Posterior vena cava (tissue), 2 donors: ENCODE measurements at regions of chr11 and their contacts with region 1.

Region 1: DNA sequence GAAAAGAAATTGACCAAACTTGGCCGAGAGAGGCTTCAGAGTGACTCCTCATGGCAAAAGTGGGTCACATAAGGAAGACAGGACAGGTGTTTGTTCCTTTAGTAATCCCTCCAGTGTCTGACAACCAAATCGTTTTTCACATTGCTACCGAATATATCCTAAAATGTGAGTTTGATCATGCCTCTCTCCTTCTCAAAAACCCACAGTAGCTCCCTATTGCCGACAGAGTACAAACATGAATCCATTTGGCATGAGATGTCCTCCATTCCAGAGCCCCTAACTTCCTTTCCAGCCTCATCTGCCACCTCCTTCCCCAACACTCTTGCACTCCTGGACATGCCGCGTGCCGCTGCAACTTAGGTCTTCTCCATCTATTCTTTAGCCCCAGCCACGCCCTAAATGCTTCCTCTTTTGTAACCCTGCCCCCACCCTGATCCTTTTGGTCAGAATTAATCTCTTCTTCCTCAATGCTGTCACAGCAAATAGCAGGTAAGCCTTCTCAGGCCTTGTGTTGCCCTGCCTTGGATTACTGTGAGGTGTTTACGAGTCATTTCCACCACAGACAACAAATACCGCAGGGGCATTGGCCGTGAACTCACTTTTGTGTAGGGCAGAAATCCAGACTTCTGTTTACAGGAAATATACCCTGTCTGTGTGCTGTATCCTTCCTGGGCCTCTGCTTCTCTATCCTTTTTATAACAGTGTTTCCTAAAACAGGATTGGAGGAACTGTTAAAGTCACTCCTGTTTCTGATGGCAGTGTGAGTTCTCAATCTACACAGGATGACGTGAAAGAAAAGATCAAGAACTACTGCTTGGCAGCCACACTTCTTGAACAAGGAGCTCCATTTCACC is 66.0 kb upstream of the FTH1 start:
- DNase-seq: no peak

Region 2: DNA sequence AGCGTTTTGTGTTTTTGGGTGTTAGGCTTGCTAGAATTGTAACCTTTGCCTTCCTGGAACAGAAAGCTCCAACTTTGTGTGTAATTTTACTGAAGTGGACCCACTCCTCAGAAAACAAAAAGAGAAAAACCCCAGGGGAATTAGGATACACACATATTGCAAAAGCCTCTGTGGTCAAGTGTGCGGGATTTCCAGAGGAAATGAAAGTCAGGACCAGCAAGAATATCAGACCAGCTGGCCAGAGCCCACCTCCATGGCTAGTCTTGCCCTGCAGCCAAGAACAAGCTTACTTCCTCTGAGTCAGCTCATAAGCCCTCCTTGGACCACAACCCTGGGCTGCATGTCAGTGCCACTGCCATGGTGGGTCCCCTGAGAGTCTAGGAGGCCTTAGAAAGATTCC is 28.9 kb before region 1 on chr11:
- intact Hi-C with region 1: loop called in 1 of 2 experiments (anchors 1 kb)
- DNase-seq: peak; percentile 85

Region 3: DNA sequence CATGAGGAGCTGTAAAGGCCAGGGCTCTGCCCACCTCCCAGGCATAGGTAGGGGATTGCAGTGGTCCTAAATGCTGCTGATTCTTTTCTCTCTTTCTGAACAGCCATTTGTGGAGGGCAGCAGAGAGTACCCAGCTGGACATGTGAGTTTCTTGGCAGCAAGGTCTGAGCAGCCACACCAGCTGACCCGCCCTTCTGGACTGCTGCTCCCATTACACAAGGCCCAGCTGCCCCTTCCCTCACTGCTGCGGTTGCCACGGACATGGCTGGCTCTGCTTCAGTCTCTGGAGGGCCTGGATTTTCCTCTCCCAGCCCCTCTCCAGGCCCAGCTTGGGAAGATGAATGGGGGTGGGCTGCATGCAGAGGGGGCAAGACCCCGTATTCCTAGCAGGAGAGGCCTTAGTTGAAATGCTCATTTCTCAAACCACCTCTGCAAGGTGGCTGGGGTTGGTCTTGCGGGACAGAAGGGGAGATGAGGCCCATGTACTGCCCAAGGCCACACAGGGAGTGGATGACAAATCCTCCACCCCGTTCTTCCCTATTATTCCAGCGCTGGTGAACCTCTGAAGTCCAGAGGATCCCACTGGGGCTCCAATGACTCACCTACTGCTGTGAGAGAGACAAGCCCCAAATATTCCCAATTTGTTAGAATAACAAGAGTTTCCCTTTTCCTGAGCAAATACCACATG is 1477.1 kb after region 1 on chr11:
- intact Hi-C with region 1: no loop called
- DNase-seq: no peak

Region 4: DNA sequence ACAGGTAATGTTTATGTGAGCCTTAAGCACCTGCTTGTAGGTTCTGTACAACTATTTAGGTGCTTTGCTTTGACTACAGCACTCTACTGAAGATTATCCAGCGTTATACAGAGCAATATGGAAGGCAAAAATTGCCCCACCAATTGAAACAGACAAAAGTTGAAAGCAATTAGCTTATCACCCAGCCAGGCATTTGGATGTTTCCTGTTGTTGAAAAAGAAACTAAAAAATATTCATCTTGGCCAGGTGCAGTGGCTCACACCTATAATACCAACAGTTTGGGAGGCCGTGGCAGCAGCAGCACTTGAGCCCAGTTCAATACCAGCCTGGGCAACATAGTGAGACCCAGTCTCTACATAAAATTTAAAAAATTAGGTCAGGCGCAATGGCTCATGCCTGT is 1619.3 kb after region 1 on chr11:
- intact Hi-C with region 1: loop called in 1 of 2 experiments (anchors 10 kb)
- DNase-seq: no peak